Heart left ventricle (tissue), 16 donors: ENCODE measurements at regions of chr10 and their contacts with region 1.

Region 1: DNA sequence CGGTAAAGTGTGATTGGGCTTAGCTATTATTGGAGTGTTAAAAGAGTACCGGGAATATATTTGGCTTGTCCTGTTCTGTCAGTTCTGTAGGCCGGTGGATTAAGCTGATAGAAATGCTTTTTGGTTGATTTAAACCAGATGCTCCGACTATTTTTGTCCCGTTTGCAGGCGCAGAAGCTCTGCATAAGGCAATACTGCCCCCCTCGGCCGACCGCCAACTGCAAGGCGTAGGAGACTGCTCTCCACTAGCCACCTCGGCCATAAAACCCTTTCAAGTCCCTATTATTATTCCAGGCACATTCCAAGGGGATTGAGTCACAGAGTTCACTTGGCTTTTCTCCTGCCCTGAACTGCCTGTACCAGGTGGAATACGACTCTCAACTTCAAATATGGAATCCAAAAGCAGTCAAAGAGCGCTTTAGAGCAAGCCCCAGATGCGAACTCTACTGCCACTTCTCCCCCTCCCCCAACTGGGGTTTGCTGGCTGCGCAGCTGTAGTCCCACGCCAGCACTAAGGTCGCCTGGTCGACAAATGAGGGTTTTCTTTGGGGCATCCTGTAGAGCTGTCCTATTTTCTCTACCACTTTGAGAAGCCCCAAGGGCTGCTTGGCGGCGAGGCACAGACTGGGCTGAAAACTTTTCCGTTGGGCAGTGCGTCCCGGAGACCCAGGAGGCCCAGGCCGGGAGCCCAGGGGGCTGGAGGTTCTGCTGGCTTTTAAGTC is 108.3 kb downstream of the REEP3 start:
- DNase-seq: peak; percentile 96 to 98 (median 97)
- ATAC-seq: peak; percentile 78 to 87 (median 80)
- H3K4me3 ChIP-seq: peak overlapping the region; percentile 14 to 71 (median 60)
- H3K27ac ChIP-seq: peak overlapping the region; percentile 93 to 99 (median 98)
- H3K4me1 ChIP-seq: peaks cover 9 to 41% (median 29%) of the 10 kb centered on the region in 12 donors
- H3K27me3 ChIP-seq: no peaks in the 10 kb centered on the region
- CTCF ChIP-seq: peak; percentile 64 to 90 (median 78)
- POLR2A ChIP-seq: no peak

Region 2: GRCh38 chr10:63206997-63207811 is 422.3 kb before region 1 on chr10:
- intact Hi-C with region 1: loop called in 4 of 10 experiments (anchors 1 to 10 kb)
- DNase-seq: peak in 4 of 5 donors; percentile 40 to 50 (median 44)
- ATAC-seq: peak; percentile 65 to 84 (median 80)
- H3K4me3 ChIP-seq: peak overlapping the region in 6 of 12 donors; percentile 5 to 20 (median 14)
- H3K27ac ChIP-seq: peak overlapping the region; percentile 29 to 85 (median 67)
- H3K4me1 ChIP-seq: peaks cover 3 to 78% (median 60%) of the 10 kb centered on the region in 12 donors
- H3K27me3 ChIP-seq: no peaks in the 10 kb centered on the region
- CTCF ChIP-seq: no peak
- POLR2A ChIP-seq: no peak

Region 3: GRCh38 chr10:63268798-63269503 is 360.6 kb before region 1 on chr10:
- intact Hi-C with region 1: loop called in 7 of 10 experiments (anchors 1 to 5 kb)
- DNase-seq: peak in 4 of 5 donors; percentile 87 to 88 (median 88)
- ATAC-seq: peak; percentile 96 to 99 (median 98)
- H3K4me3 ChIP-seq: peak overlapping the region; percentile 30 to 68 (median 58)
- H3K27ac ChIP-seq: peak overlapping the region; percentile 84 to 96 (median 88)
- H3K4me1 ChIP-seq: peaks cover 4 to 38% (median 19%) of the 10 kb centered on the region in 12 donors
- H3K27me3 ChIP-seq: no peaks in the 10 kb centered on the region
- CTCF ChIP-seq: peak in 10 of 12 donors; percentile 13 to 49 (median 38)
- POLR2A ChIP-seq: peak in 1 of 2 donors; percentile 94

Region 4: GRCh38 chr10:63521416-63522276 is 107.9 kb before region 1 on chr10:
- intact Hi-C with region 1: loop called in 8 of 10 experiments (anchors 1 to 5 kb)
- DNase-seq: peak; percentile 69 to 88 (median 76)
- ATAC-seq: peak; percentile 15 to 91 (median 82)
- H3K4me3 ChIP-seq: peak overlapping the region; percentile 63 to 91 (median 78)
- H3K27ac ChIP-seq: peak overlapping the region; percentile 97 to 99 (median 98)
- H3K4me1 ChIP-seq: peaks cover 4 to 64% (median 49%) of the 10 kb centered on the region in 12 donors
- H3K27me3 ChIP-seq: no peaks in the 10 kb centered on the region
- CTCF ChIP-seq: no peak
- POLR2A ChIP-seq: peak in 1 of 2 donors; percentile 35

Region 5: GRCh38 chr10:63666836-63667383 is 37.4 kb after region 1 on chr10:
- intact Hi-C with region 1: loop called in 5 of 10 experiments (anchors 2 to 5 kb)
- DNase-seq: no peak
- ATAC-seq: no peak
- H3K4me3 ChIP-seq: no peak overlapping the region
- H3K27ac ChIP-seq: peak overlapping the region in 11 of 12 donors; percentile 9 to 59 (median 40)
- H3K4me1 ChIP-seq: peaks cover 3 to 44% (median 24%) of the 10 kb centered on the region in 12 donors
- H3K27me3 ChIP-seq: no peaks in the 10 kb centered on the region
- CTCF ChIP-seq: no peak
- POLR2A ChIP-seq: no peak